ENCODE measurements at regions of chr3 and their contacts with region 1.

Region 1: DNA sequence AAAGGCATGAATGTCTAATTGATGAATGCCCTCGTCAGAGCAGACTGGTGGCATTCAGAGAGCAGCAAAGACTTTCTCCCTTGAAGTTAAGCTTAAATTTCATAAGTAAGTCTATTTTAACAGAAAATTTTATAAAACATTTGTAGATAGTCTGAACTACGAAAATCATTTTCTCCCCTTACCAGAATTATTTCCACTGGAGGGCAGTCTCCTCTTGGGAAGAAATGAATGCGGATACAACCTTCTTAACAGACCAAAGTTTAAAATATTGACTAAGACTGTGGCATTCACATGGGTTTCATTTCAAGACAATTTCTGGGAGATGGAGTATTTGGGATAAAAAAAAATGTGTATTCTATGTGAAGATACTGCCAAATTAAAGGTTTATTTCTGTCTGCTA is 669.0 kb downstream of the FHIT start:
- DNase-seq: no peak
- ATAC-seq: no peak
- H3K4me3 ChIP-seq: no peak overlapping the region
- H3K27ac ChIP-seq: no peak overlapping the region
- H3K4me1 ChIP-seq: no peaks in the 10 kb centered on the region
- H3K27me3 ChIP-seq: no peaks in the 10 kb centered on the region
- CTCF ChIP-seq: peak in 9 of 12 donors; percentile 13 to 47 (median 30)
- POLR2A ChIP-seq: no peak

Region 2: GRCh38 chr3:60622349-60622748 is 40.1 kb after region 1 on chr3:
- intact Hi-C with region 1: no loop called
- DNase-seq: no peak
- ATAC-seq: no peak
- H3K4me3 ChIP-seq: no peak overlapping the region
- H3K27ac ChIP-seq: no peak overlapping the region
- H3K4me1 ChIP-seq: no peaks in the 10 kb centered on the region
- H3K27me3 ChIP-seq: no peaks in the 10 kb centered on the region
- CTCF ChIP-seq: no peak
- POLR2A ChIP-seq: no peak

Region 3: DNA sequence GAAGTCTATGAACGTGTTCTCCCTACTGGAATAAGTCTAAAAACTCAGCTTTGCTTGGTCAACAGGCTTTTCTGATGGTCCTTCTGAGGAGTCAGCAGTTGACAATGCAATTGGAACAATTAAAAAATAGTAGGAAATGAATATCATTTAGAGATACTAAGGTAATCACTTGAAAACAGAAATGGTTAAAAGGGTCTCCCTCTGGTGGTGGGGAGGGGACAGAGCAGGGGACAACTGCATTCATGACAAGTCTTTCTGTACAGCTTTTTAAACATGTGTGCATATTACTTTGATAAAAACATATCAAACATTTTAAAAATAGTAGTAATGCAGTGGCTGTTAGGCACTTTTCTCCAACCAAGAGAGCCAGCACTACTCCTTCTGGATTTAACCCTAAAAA is 788.8 kb after region 1 on chr3:
- intact Hi-C with region 1: loop called in 2 of 10 experiments (anchors 10 kb)
- DNase-seq: no peak
- ATAC-seq: no peak
- H3K4me3 ChIP-seq: no peak overlapping the region
- H3K27ac ChIP-seq: no peak overlapping the region
- H3K4me1 ChIP-seq: no peaks in the 10 kb centered on the region
- H3K27me3 ChIP-seq: no peaks in the 10 kb centered on the region
- CTCF ChIP-seq: peak in 10 of 12 donors; percentile 32 to 65 (median 50)
- POLR2A ChIP-seq: no peak